Transverse colon (tissue), 4 donors: ENCODE measurements at regions of chr11 and their contacts with region 1.

Region 1: GRCh38 chr11:10857709-10858438 is at the start of gene ZBED5:
- DNase-seq: peak; percentile 98
- H3K4me3 ChIP-seq: peak within 1 kb of the TSS; percentile 70 to 87 (median 79)
- H3K27ac ChIP-seq: peak within 1 kb of the TSS; percentile 98 to 99 (median 99)
- H3K4me1 ChIP-seq: peaks cover 0 to 42% (median 19%) of the 10 kb centered on the region in 4 donors
- H3K27me3 ChIP-seq: no peaks in the 10 kb centered on the region
- CTCF ChIP-seq: peak in 4 of 5 experiments; percentile 22 to 47 (median 36)
- EP300 ChIP-seq: no peak
- POLR2A ChIP-seq: peak; percentile 99
- total RNA-seq, gene ZBED5: 13.7 to 38.4 (median 29.7) TPM

Region 2: DNA sequence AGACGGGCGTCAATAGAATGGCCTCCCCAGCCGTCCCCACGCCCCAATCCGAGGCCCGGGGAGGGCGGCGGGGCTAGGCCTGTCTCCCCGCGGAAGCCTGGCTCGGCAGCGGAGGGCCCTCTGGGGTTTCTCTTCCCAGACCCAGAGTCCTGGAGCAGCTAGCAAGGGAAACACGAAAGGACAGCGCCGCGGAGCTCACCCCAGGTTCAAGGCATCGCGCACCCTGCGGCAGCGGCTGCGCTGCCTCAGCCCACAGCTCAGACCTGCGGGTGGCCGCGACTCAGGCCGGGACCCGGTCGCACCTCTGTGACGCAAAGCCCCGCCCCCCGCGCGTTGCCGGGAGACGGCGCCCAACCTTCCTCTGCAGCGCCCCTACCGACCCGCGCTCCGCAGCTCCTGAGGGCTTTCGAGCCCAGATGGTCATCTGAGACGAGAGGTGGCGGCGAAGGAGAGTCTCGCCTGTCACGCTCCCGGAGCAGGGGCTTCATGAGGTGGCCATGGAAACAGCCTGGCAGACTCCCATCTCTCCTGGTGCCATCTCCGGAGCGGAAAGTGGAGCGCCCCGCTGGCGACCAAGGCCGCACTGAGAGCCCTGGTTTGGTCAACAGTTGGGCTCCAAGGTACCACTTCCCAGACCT is 316.8 kb before region 1 on chr11 and contains the start of gene RNF141:
- in situ Hi-C with region 1: no loop called
- intact Hi-C with region 1: no loop called
- DNase-seq: peak; percentile 97
- H3K4me3 ChIP-seq: peak within 1 kb of the TSS; percentile 61 to 89 (median 72)
- H3K27ac ChIP-seq: peak within 1 kb of the TSS; percentile 87 to 94 (median 90)
- H3K4me1 ChIP-seq: peaks cover 6 to 18% (median 9%) of the 10 kb centered on the region in 4 donors
- H3K27me3 ChIP-seq: no peaks in the 10 kb centered on the region
- CTCF ChIP-seq: peak; percentile 79 to 95 (median 84)
- EP300 ChIP-seq: no peak
- POLR2A ChIP-seq: peak; percentile 96
- total RNA-seq, gene RNF141: 13.1 to 31.4 (median 22.3) TPM

Region 3: GRCh38 chr11:10808553-10809372 is 49.1 kb before region 1 on chr11 and contains the start of gene EIF4G2:
- in situ Hi-C with region 1: loop called in 1 of 4 experiments (anchors 10 kb)
- intact Hi-C with region 1: loop called (anchors 2 kb)
- DNase-seq: peak; percentile 99
- H3K4me3 ChIP-seq: peak within 1 kb of the TSS; percentile 84 to 95 (median 91)
- H3K27ac ChIP-seq: peak within 1 kb of the TSS; percentile 96 to 100 (median 98)
- H3K4me1 ChIP-seq: peaks cover 27 to 42% (median 31%) of the 10 kb centered on the region in 4 donors
- H3K27me3 ChIP-seq: no peaks in the 10 kb centered on the region
- CTCF ChIP-seq: peak in 1 of 5 experiments; percentile 11
- EP300 ChIP-seq: no peak
- POLR2A ChIP-seq: peak; percentile 100
- total RNA-seq, gene EIF4G2: 357 to 482 (median 444) TPM

Region 4: GRCh38 chr11:10906513-10906912 is 48.6 kb after region 1 on chr11:
- in situ Hi-C with region 1: no loop called
- intact Hi-C with region 1: loop called (anchors 10 kb)
- DNase-seq: no peak
- H3K4me3 ChIP-seq: no peak overlapping the region
- H3K27ac ChIP-seq: no peak overlapping the region
- H3K4me1 ChIP-seq: peaks cover 0 to under 1% (median 0%) of the 10 kb centered on the region in 4 donors
- H3K27me3 ChIP-seq: no peaks in the 10 kb centered on the region
- CTCF ChIP-seq: no peak
- EP300 ChIP-seq: no peak
- POLR2A ChIP-seq: no peak

Region 5: GRCh38 chr11:11135820-11136465 is 278.1 kb after region 1 on chr11:
- in situ Hi-C with region 1: no loop called
- intact Hi-C with region 1: no loop called
- DNase-seq: no peak
- H3K4me3 ChIP-seq: no peak overlapping the region
- H3K27ac ChIP-seq: no peak overlapping the region
- H3K4me1 ChIP-seq: peaks cover 0 to 4% (median 0%) of the 10 kb centered on the region in 4 donors
- H3K27me3 ChIP-seq: no peaks in the 10 kb centered on the region
- CTCF ChIP-seq: no peak
- EP300 ChIP-seq: no peak
- POLR2A ChIP-seq: no peak